ENCODE measurements at regions of chr2 and their contacts with region 1.

Region 1: GRCh38 chr2:36785179-36785795 is 88.8 kb downstream of the VIT start:
- DNase-seq: peak; percentile 23 to 74 (median 61)
- ATAC-seq: peak; percentile 85
- H3K4me3 ChIP-seq: no peak overlapping the region
- H3K4me3 Mint-ChIP-seq: no peak overlapping the region
- H3K27ac ChIP-seq: no peak overlapping the region
- H3K27ac Mint-ChIP-seq: peak overlapping the region in 1 of 9 donors; percentile 43
- H3K4me1 ChIP-seq: no peaks in the 10 kb centered on the region
- H3K4me1 Mint-ChIP-seq: peaks cover 0 to 15% (median 2%) of the 10 kb centered on the region in 7 donors
- H3K27me3 ChIP-seq: no peaks in the 10 kb centered on the region
- H3K27me3 Mint-ChIP-seq: peaks cover 0 to 37% (median 5%) of the 10 kb centered on the region in 5 donors

Region 2: GRCh38 chr2:35168354-35168753 is 1616.9 kb before region 1 on chr2:
- CTCF ChIA-PET with region 1: no interaction called
- POLR2A ChIA-PET with region 1: no interaction called
- intact Hi-C with region 1: loop called in 1 of 2 experiments (anchors 5 kb)
- DNase-seq: no peak
- ATAC-seq: no peak
- H3K4me3 ChIP-seq: no peak overlapping the region
- H3K4me3 Mint-ChIP-seq: no peak overlapping the region
- H3K27ac ChIP-seq: no peak overlapping the region
- H3K27ac Mint-ChIP-seq: no peak overlapping the region
- H3K4me1 ChIP-seq: no peaks in the 10 kb centered on the region
- H3K4me1 Mint-ChIP-seq: no peaks in the 10 kb centered on the region
- H3K27me3 ChIP-seq: no peaks in the 10 kb centered on the region
- H3K27me3 Mint-ChIP-seq: no peaks in the 10 kb centered on the region

Region 3: GRCh38 chr2:35973132-35973736 is 812.1 kb before region 1 on chr2:
- CTCF ChIA-PET with region 1: no interaction called
- POLR2A ChIA-PET with region 1: no interaction called
- intact Hi-C with region 1: loop called in 1 of 2 experiments (anchors 5 kb)
- DNase-seq: no peak
- ATAC-seq: peak; percentile 47
- H3K4me3 ChIP-seq: no peak overlapping the region
- H3K4me3 Mint-ChIP-seq: no peak overlapping the region
- H3K27ac ChIP-seq: no peak overlapping the region
- H3K27ac Mint-ChIP-seq: peak overlapping the region in 1 of 9 donors; percentile 44
- H3K4me1 ChIP-seq: peaks cover 0 to 12% of the 10 kb centered on the region in 2 donors
- H3K4me1 Mint-ChIP-seq: peaks cover 0 to 7% (median 0%) of the 10 kb centered on the region in 7 donors
- H3K27me3 ChIP-seq: no peaks in the 10 kb centered on the region
- H3K27me3 Mint-ChIP-seq: peaks cover 0 to 26% (median 0%) of the 10 kb centered on the region in 5 donors

Region 4: GRCh38 chr2:36918307-36918706 is 133.0 kb after region 1 on chr2:
- CTCF ChIA-PET with region 1: no interaction called
- POLR2A ChIA-PET with region 1: no interaction called
- intact Hi-C with region 1: loop called in 1 of 2 experiments (anchors 10 kb)
- DNase-seq: no peak
- ATAC-seq: no peak
- H3K4me3 ChIP-seq: no peak overlapping the region
- H3K4me3 Mint-ChIP-seq: no peak overlapping the region
- H3K27ac ChIP-seq: no peak overlapping the region
- H3K27ac Mint-ChIP-seq: no peak overlapping the region
- H3K4me1 ChIP-seq: no peaks in the 10 kb centered on the region
- H3K4me1 Mint-ChIP-seq: peaks cover 9 to 31% (median 27%) of the 10 kb centered on the region in 7 donors
- H3K27me3 ChIP-seq: no peaks in the 10 kb centered on the region
- H3K27me3 Mint-ChIP-seq: no peaks in the 10 kb centered on the region

Region 5: GRCh38 chr2:37005118-37005868 is 220.0 kb after region 1 on chr2:
- CTCF ChIA-PET with region 1: no interaction called
- POLR2A ChIA-PET with region 1: no interaction called
- intact Hi-C with region 1: loop called (anchors 1 kb)
- DNase-seq: peak in 7 of 9 donors; percentile 15 to 46 (median 18)
- ATAC-seq: peak; percentile 80
- H3K4me3 ChIP-seq: no peak overlapping the region
- H3K4me3 Mint-ChIP-seq: peak overlapping the region in 8 of 10 donors; percentile 15 to 76 (median 56)
- H3K27ac ChIP-seq: peak overlapping the region; percentile 22
- H3K27ac Mint-ChIP-seq: peak overlapping the region; percentile 28 to 84 (median 71)
- H3K4me1 ChIP-seq: no peaks in the 10 kb centered on the region
- H3K4me1 Mint-ChIP-seq: peaks cover 5 to 17% (median 9%) of the 10 kb centered on the region in 7 donors
- H3K27me3 ChIP-seq: no peaks in the 10 kb centered on the region
- H3K27me3 Mint-ChIP-seq: no peaks in the 10 kb centered on the region

Region 6: GRCh38 chr2:37026050-37026449 is 240.8 kb after region 1 on chr2:
- CTCF ChIA-PET with region 1: no interaction called
- POLR2A ChIA-PET with region 1: no interaction called
- intact Hi-C with region 1: loop called in 1 of 2 experiments (anchors 1 kb)
- DNase-seq: no peak
- ATAC-seq: no peak
- H3K4me3 ChIP-seq: no peak overlapping the region
- H3K4me3 Mint-ChIP-seq: no peak overlapping the region
- H3K27ac ChIP-seq: no peak overlapping the region
- H3K27ac Mint-ChIP-seq: peak overlapping the region in 1 of 9 donors; percentile 74
- H3K4me1 ChIP-seq: no peaks in the 10 kb centered on the region
- H3K4me1 Mint-ChIP-seq: peaks cover 0 to 2% (median 0%) of the 10 kb centered on the region in 7 donors
- H3K27me3 ChIP-seq: no peaks in the 10 kb centered on the region
- H3K27me3 Mint-ChIP-seq: no peaks in the 10 kb centered on the region

Region 7: GRCh38 chr2:37244017-37244416 is 458.7 kb after region 1 on chr2:
- CTCF ChIA-PET with region 1: no interaction called
- POLR2A ChIA-PET with region 1: no interaction called
- intact Hi-C with region 1: loop called in 1 of 2 experiments (anchors 10 kb)
- DNase-seq: peak in 2 of 9 donors; percentile 15 to 19
- ATAC-seq: peak; percentile 63
- H3K4me3 ChIP-seq: no peak overlapping the region
- H3K4me3 Mint-ChIP-seq: peak overlapping the region in 3 of 10 donors; percentile 7 to 58 (median 54)
- H3K27ac ChIP-seq: peak overlapping the region; percentile 8
- H3K27ac Mint-ChIP-seq: peak overlapping the region; percentile 30 to 92 (median 86)
- H3K4me1 ChIP-seq: no peaks in the 10 kb centered on the region
- H3K4me1 Mint-ChIP-seq: peaks cover 5 to 41% (median 19%) of the 10 kb centered on the region in 7 donors
- H3K27me3 ChIP-seq: no peaks in the 10 kb centered on the region
- H3K27me3 Mint-ChIP-seq: no peaks in the 10 kb centered on the region